ENCODE measurements at regions of chr17 and their contacts with region 1.

Region 1: GRCh38 chr17:63478791-63479494 is 2.1 kb downstream of the ACE start:
- DNase-seq: peak; percentile 88
- H3K4me3 Mint-ChIP-seq: peak overlapping the region; percentile 16
- H3K27ac Mint-ChIP-seq: no peak overlapping the region
- H3K4me1 Mint-ChIP-seq: peaks cover 15% of the 10 kb centered on the region
- H3K27me3 Mint-ChIP-seq: peaks cover 5% of the 10 kb centered on the region

Region 2: DNA sequence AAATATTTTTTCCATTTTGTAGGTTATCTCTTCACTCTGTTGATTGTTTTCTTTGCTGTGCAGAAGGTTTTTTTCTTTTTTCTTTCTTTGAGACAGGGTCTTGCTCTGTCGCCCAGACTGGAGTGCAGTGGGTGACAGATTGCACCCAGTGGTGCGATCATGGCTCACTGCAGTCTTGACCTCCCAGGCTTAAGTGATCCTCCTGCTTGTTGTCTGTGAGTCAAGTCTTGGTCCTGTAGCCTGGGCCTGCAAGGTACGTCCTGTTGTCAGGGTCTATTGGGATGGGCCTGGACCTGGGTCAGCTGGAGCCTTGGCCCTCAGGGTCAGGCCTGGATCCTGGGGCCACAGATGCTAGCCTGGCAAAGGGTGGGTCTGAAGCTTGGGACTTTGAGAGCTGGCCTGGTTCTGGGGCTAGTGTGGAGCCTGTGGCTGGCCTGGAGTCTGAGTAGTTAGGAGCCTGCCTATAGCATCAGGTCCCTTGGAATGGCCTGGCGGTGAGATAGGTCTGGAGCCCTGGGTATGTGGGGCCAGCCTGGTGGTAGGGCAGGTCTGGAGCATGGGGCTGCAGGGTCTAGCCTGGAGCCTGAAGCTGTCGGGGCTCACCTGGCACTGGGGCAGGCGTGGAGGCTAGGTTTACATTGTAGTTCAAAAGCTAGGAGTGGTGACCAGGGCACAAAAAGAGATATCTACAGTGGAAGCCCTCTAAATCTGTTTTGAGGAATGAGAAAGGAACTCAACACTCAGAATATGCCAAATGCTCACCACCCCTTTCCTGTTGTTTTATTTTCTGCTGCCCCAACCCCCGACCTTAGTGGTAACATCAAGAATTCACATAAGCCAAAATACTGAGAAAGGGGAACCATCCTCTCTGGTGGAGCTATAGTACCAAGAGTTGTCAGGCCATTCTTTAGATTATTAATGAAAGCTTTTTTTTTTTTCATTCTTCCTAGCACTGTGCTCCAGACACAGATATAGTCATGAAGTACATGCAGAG is 412.8 kb before region 1 on chr17:
- CTCF ChIA-PET with region 1: no interaction called
- POLR2A ChIA-PET with region 1: no interaction called
- intact Hi-C with region 1: no loop called
- DNase-seq: no peak
- H3K4me3 Mint-ChIP-seq: no peak overlapping the region
- H3K27ac Mint-ChIP-seq: no peak overlapping the region
- H3K4me1 Mint-ChIP-seq: peaks cover 7% of the 10 kb centered on the region
- H3K27me3 Mint-ChIP-seq: no peaks in the 10 kb centered on the region

Region 3: GRCh38 chr17:63419949-63420867 is 58.7 kb before region 1 on chr17:
- CTCF ChIA-PET with region 1: interaction called, 233 read pairs
- POLR2A ChIA-PET with region 1: no interaction called
- intact Hi-C with region 1: loop called (anchors 1 kb)
- DNase-seq: peak; percentile 62
- H3K4me3 Mint-ChIP-seq: no peak overlapping the region
- H3K27ac Mint-ChIP-seq: peak overlapping the region; percentile 50
- H3K4me1 Mint-ChIP-seq: peaks cover 13% of the 10 kb centered on the region
- H3K27me3 Mint-ChIP-seq: no peaks in the 10 kb centered on the region

Region 4: DNA sequence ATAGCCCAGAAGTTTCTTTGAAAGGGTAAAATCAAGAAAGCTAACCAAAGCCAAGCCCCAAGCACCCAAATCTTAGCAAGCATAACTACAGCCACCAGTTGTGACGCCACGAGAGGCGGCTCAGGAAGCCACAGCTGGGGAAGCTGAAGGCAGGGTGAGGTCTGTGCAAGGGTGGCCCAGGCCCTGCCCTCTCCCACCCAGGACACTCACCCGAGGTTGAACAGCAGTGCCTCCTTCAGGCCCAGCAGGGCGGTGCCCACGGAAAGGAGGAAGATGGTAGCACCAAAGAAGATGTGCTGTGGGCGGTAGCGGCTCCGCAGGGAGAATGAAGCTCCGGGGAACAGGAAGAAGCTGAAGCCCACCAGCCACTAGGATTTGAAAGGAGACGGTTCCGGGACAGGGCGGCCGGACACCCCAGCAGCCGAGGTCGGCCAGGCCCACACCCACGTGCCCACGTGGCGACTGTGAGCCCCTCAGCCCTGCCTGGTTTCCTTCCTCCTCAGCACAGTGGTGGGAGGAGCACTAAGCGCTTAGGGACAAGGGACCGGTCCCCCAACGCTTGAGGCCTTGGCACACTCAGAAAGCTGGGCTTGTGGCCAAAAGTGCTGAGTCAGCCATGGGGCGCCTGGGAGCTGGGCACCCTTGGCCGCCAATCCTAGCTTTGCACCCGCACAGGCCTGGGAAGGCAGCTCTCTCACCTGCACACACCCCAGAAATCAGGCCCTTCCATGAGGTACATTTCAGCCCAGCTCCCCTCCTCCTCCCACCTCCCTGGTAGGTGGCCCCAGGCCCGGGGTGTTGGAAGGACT is 43.9 kb before region 1 on chr17:
- CTCF ChIA-PET with region 1: interaction called, 233 read pairs
- POLR2A ChIA-PET with region 1: no interaction called
- intact Hi-C with region 1: no loop called
- DNase-seq: peak; percentile 56
- H3K4me3 Mint-ChIP-seq: no peak overlapping the region
- H3K27ac Mint-ChIP-seq: peak overlapping the region; percentile 46
- H3K4me1 Mint-ChIP-seq: peaks cover 40% of the 10 kb centered on the region
- H3K27me3 Mint-ChIP-seq: no peaks in the 10 kb centered on the region

Region 5: DNA sequence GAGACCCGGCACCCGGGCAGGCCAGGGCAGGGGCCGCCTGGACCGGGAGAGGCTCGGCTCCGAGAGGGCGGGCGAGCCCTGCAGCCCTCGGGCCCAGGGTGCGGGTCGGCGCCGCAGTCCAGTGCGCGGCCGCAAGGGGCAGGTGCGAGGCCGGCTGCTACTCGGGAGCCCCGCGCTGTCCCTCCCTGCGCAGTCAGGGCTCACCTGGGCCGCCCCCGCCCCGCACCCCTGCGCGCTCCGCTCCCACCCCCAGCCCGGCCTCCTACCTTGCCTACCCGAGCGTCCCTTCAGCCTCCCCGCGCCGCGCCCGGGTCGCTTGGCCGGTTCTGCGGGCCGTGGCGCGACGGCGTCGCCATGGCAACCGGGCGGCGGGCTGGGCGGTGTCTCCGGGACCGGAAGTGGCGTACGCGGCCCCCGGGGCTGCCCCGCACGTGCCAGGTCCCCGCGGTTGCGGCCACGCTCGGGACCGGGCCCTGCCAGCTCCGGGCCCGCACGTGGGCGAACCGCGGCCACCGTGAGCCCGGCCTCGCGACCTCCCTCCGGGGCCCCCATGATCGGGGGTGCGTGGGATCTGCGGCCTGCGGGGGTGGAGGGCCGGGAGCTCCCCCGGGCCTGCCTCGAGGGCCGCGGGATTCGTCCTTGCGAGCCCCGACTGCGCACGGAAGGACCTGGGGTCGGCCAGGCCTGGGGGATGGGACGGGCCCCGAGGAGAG is 32.8 kb before region 1 on chr17 and contains the start of gene CYB561:
- CTCF ChIA-PET with region 1: interaction called, 38 read pairs
- POLR2A ChIA-PET with region 1: interaction called, 6 read pairs
- intact Hi-C with region 1: loop called (anchors 2 kb)
- DNase-seq: peak; percentile 81
- H3K4me3 Mint-ChIP-seq: peak within 1 kb of the TSS; percentile 70
- H3K27ac Mint-ChIP-seq: peak within 1 kb of the TSS; percentile 89
- H3K4me1 Mint-ChIP-seq: peaks cover 38% of the 10 kb centered on the region
- H3K27me3 Mint-ChIP-seq: peaks cover 1% of the 10 kb centered on the region
- total RNA-seq, gene CYB561: 9.4 to 9.7 TPM

Region 6: GRCh38 chr17:63491976-63492618 is 13.2 kb after region 1 on chr17:
- CTCF ChIA-PET with region 1: interaction called, 12 read pairs
- POLR2A ChIA-PET with region 1: no interaction called
- intact Hi-C with region 1: no loop called
- DNase-seq: no peak
- H3K4me3 Mint-ChIP-seq: no peak overlapping the region
- H3K27ac Mint-ChIP-seq: no peak overlapping the region
- H3K4me1 Mint-ChIP-seq: no peaks in the 10 kb centered on the region
- H3K27me3 Mint-ChIP-seq: no peaks in the 10 kb centered on the region

Region 7: GRCh38 chr17:63621766-63622519 is 143.0 kb after region 1 on chr17 and contains the start of gene MAP3K3:
- CTCF ChIA-PET with region 1: interaction called, 12 read pairs
- POLR2A ChIA-PET with region 1: no interaction called
- intact Hi-C with region 1: no loop called
- DNase-seq: peak; percentile 99
- H3K4me3 Mint-ChIP-seq: peak within 1 kb of the TSS; percentile 99
- H3K27ac Mint-ChIP-seq: peak within 1 kb of the TSS; percentile 87
- H3K4me1 Mint-ChIP-seq: peaks cover 38% of the 10 kb centered on the region
- H3K27me3 Mint-ChIP-seq: no peaks in the 10 kb centered on the region
- total RNA-seq, gene MAP3K3: 32.8 to 34.0 TPM